Breast epithelium (tissue), 4 donors: ENCODE measurements at regions of chr19 and their contacts with region 1.

Region 1: GRCh38 chr19:2096480-2097329 is at the start of gene IZUMO4:
- DNase-seq: peak; percentile 98 to 100
- H3K4me3 ChIP-seq: peak within 1 kb of the TSS; percentile 61 to 85 (median 70)
- H3K27ac ChIP-seq: peak within 1 kb of the TSS; percentile 92 to 97
- H3K4me1 ChIP-seq: peaks cover 0 to 10% of the 10 kb centered on the region in 2 donors
- H3K27me3 ChIP-seq: no peaks in the 10 kb centered on the region
- CTCF ChIP-seq: peak; percentile 19 to 48 (median 27)
- POLR2A ChIP-seq: no peak
- total RNA-seq, gene IZUMO4: 3.6 to 12.8 (median 3.7) TPM

Region 2: DNA sequence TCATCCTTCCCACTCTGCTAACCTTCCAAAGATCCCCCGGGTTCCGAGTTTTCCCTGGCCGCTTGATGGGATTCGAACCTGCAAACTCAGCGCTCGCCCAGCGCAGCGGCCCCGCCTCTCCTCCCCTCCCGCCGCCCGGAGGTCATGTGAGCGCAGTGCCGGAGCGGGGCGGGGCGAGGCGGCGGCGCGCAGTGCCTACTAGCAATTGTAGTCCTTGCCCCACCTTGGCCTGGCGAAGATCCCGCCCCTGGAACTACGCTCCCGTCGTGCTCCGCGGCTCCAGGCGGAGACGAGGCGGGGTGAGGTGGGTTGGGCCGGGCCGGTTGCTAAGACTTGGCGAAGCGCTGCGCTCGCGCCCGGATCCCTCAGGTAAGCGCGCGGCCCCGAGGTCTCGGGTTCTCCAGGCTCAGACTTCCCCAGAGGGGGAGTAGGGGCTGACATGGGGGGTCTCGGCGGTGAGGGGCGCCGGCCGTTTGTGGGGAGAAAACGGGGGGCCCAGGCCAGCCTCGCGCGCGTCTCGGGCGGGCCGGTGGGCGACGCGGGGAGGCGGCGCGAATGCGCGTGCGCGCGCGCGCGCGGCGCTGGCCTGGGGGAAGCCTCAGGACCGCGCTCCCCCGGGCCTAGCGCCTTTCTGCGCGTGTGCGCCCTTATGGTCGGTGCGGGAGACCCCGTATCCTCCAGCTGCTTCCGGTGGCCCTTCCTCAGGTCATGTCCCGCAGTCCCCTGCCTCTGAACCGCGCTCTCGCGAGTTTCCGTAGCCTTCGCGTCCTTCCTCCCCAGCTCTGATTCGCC is 191.4 kb before region 1 on chr19 and contains the starts of genes ADAT3 and SCAMP4:
- intact Hi-C with region 1: loop called (anchors 10 kb)
- DNase-seq: peak; percentile 98 to 100
- H3K4me3 ChIP-seq: peak within 1 kb of the TSS; percentile 69 to 82 (median 70)
- H3K27ac ChIP-seq: peak within 1 kb of the TSS; percentile 94 to 95
- H3K4me1 ChIP-seq: peaks cover 11 to 13% of the 10 kb centered on the region in 2 donors
- H3K27me3 ChIP-seq: no peaks in the 10 kb centered on the region
- CTCF ChIP-seq: no peak
- POLR2A ChIP-seq: peak; percentile 80
- total RNA-seq, gene ADAT3: 1.1 to 5.4 (median 4.9) TPM
- total RNA-seq, gene SCAMP4: 41.4 to 66.6 (median 44.6) TPM